Body of pancreas (tissue), 4 donors: ENCODE measurements at regions of chr7 and their contacts with region 1.

Region 1: GRCh38 chr7:151351027-151351426 is 9.4 kb downstream of the NUB1 start:
- DNase-seq: no peak
- ATAC-seq: no peak
- H3K4me3 ChIP-seq: no peak overlapping the region
- H3K27ac ChIP-seq: peak overlapping the region in 1 of 4 donors; percentile 95
- H3K4me1 ChIP-seq: peaks cover 21% of the 10 kb centered on the region
- H3K27me3 ChIP-seq: no peaks in the 10 kb centered on the region
- CTCF ChIP-seq: no peak
- POLR2A ChIP-seq: no peak

Region 2: GRCh38 chr7:151315038-151315655 is 35.9 kb before region 1 on chr7:
- intact Hi-C with region 1: loop called (anchors 5 kb)
- DNase-seq: peak; percentile 77 to 84 (median 82)
- ATAC-seq: peak; percentile 85
- H3K4me3 ChIP-seq: no peak overlapping the region
- H3K27ac ChIP-seq: no peak overlapping the region
- H3K4me1 ChIP-seq: no peaks in the 10 kb centered on the region
- H3K27me3 ChIP-seq: no peaks in the 10 kb centered on the region
- CTCF ChIP-seq: peak; percentile 71 to 87 (median 82)
- POLR2A ChIP-seq: no peak